Activated B cell treated with CpG ODN at 0.5 μM for 24 hours (primary cell): ENCODE measurements at regions of chr9 and their contacts with region 1.

Region 1: GRCh38 chr9:17531642-17532254 is 47.1 kb upstream of the SH3GL2 start:
- DNase-seq: no peak
- ATAC-seq: no peak
- H3K4me3 Mint-ChIP-seq: no peak overlapping the region
- H3K27ac Mint-ChIP-seq: no peak overlapping the region
- H3K4me1 Mint-ChIP-seq: no peaks in the 10 kb centered on the region
- H3K27me3 Mint-ChIP-seq: no peaks in the 10 kb centered on the region
- CTCF ChIP-seq: no peak

Region 2: GRCh38 chr9:17402309-17402708 is 129.4 kb before region 1 on chr9:
- CTCF ChIA-PET with region 1: no interaction called
- POLR2A ChIA-PET with region 1: interaction called, 12 read pairs
- intact Hi-C with region 1: no loop called
- DNase-seq: no peak
- ATAC-seq: no peak
- H3K4me3 Mint-ChIP-seq: no peak overlapping the region
- H3K27ac Mint-ChIP-seq: no peak overlapping the region
- H3K4me1 Mint-ChIP-seq: no peaks in the 10 kb centered on the region
- H3K27me3 Mint-ChIP-seq: no peaks in the 10 kb centered on the region
- CTCF ChIP-seq: no peak

Region 3: DNA sequence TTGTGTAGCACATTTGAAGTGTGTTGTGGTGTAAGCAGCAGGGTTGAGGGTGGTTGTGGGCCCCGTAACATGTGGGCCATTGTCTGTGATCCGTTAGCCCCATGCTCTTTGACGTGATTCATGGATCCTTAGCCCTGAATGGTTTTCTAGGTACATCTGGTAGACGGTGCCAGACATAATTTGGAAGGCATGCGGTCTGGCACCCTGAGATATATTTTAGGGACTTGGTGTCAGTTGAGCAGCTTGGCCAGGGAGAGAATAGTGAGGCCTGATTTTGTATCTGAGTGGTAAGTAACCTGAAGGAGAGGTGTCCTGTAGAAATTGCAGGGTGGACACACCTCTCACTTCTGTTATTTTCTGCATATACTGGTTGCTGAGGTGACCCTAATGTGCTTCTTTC is 58.0 kb after region 1 on chr9:
- CTCF ChIA-PET with region 1: no interaction called
- POLR2A ChIA-PET with region 1: no interaction called
- intact Hi-C with region 1: loop called (anchors 10 kb)
- DNase-seq: no peak
- ATAC-seq: no peak
- H3K4me3 Mint-ChIP-seq: no peak overlapping the region
- H3K27ac Mint-ChIP-seq: no peak overlapping the region
- H3K4me1 Mint-ChIP-seq: no peaks in the 10 kb centered on the region
- H3K27me3 Mint-ChIP-seq: no peaks in the 10 kb centered on the region
- CTCF ChIP-seq: no peak

Region 4: DNA sequence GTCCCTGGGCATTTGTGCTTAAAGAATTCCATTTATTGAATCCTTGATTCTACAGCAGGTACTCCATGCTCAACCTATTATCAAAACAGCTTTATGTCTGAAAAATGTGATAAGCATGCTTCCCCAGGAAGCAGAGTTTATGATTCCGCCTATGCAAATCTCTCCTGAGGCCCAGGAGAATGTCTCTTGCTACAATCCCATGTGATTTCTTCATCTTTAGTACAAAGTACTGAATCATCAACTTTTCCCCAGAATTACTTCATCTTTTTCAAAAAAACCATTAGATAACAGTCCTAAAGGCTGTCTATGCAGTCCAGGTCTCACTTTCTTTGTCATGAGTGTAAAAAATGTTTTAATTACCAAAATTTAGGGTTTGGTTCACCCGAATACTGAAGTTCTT is 812.0 kb after region 1 on chr9:
- CTCF ChIA-PET with region 1: no interaction called
- POLR2A ChIA-PET with region 1: no interaction called
- intact Hi-C with region 1: no loop called
- DNase-seq: no peak
- ATAC-seq: no peak
- H3K4me3 Mint-ChIP-seq: no peak overlapping the region
- H3K27ac Mint-ChIP-seq: no peak overlapping the region
- H3K4me1 Mint-ChIP-seq: no peaks in the 10 kb centered on the region
- H3K27me3 Mint-ChIP-seq: no peaks in the 10 kb centered on the region
- CTCF ChIP-seq: no peak